AG04449 (cell line): ENCODE measurements at regions of chr11 and their contacts with region 1.

Region 1: GRCh38 chr11:65625628-65626342 is 10.2 kb downstream of the PCNX3 start:
- DNase-seq: no peak
- H3K4me3 ChIP-seq: no peak overlapping the region
- CTCF ChIP-seq: peak; percentile 52

Region 2: DNA sequence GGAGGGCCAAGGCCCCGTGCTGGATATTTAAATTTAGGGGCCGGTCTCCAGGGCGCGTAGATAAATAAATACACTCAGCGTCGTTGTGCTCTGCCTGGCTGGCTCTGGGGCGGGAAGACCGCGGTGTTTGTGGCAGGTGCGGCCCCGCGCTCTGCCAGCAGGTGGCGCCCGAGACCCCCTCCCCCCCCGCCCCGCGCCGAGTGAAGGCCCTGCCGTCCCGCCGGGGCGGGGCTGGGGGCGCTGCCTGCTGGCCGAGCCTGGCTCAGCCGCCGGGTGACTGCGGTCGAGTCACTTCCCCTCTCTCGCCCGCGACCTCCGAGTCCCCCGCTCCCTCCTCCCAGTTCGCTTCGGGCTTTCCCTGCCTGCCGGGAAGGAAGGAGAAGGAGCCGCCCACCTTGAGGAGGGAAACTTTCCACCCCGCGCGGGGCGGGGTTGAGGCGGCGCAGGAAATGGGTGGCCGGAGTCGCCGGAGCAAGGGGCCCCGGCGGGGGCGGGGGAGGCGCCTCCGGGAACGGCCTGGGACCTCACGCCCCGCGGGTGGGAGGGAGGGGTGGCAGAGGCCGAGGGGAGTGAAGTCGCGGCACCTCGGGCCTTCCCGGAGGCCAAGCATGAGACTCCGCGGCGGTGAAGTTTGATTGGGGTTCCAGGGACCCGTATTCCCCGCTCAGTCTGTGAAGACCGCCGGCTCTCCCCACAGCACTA is 51.5 kb before region 1 on chr11:
- CTCF ChIA-PET with region 1: no interaction called
- POLR2A ChIA-PET with region 1: no interaction called
- DNase-seq: peak; percentile 54
- H3K4me3 ChIP-seq: peak overlapping the region; percentile 89
- CTCF ChIP-seq: peak; percentile 54

Region 3: DNA sequence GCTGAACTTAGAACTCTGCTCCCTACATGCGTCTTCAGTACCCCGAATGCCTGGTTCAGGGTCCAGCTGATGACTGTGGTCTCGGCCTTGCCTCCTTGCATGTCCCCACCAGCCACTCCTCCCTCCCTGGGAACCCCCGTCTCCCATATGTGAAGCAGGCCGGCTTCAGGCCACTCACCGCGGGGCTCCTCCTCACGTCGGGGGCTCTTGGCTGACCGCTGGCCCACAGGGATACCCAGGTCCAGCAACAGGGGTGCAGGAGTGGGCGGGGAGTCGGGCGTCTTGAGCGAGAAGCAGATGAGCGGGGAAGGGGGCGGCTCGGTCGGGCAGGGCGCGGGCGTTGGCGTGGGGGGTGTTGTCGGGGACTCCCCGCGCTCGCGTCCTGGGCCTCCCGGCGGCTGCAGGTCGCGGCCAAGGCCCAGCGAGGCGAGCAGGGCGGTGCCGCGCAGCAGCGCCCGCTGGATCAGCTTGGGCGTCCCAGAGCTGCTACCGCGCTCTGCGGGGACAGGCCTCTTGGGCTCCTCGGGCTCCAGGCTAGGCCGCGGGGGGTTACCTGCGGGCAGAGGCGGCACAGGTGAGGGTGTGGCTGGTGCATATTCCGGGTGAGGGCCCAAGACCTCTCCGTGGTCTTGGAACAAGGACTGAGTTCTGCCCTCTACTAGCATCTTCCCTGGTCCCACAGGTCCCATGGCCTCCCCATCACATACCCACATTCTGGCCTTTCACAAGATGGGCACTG is 26.4 kb before region 1 on chr11:
- CTCF ChIA-PET with region 1: no interaction called
- POLR2A ChIA-PET with region 1: no interaction called
- DNase-seq: no peak
- H3K4me3 ChIP-seq: no peak overlapping the region
- CTCF ChIP-seq: no peak

Region 4: GRCh38 chr11:65615229-65615941 is 10.4 kb before region 1 on chr11 and contains the start of gene PCNX3:
- CTCF ChIA-PET with region 1: interaction called, 16 read pairs
- POLR2A ChIA-PET with region 1: interaction called, 4 read pairs
- DNase-seq: peak; percentile 99
- H3K4me3 ChIP-seq: peak within 1 kb of the TSS; percentile 93
- CTCF ChIP-seq: no peak

Region 5: DNA sequence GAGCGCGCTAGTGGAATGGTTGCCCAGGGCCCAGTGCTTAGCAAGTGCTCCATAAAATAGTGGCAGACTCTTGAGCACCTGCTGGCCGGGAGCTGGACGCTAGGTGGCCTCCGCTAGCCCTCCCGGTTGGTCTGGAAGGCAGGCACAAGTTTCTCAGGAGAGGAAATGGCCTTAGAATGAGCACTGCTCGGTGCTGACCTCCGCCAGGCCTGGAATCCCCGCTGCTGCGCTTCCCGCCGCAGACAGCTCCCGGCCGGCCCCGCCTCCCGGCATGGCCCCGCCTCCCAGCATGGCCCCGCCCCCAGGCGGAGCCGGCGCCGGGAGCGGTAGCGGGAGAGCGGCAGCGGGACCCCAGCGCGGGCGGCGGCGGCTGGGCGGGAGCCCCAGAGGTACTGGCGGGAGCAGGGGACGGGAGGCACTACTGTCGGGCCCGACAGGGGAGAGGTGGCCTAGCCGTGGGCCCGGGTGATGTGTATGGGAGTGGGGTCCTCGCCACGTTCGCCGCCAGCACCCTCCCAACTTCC is 12.1 kb after region 1 on chr11 and contains the start of gene SIPA1:
- CTCF ChIA-PET with region 1: interaction called, 20 read pairs
- POLR2A ChIA-PET with region 1: no interaction called
- DNase-seq: no peak
- H3K4me3 ChIP-seq: peak within 1 kb of the TSS; percentile 78
- CTCF ChIP-seq: peak; percentile 65